Aorta (tissue), 5 donors: ENCODE measurements at regions of chr4 and their contacts with region 1.

Region 1: GRCh38 chr4:63869370-63869769 is 539.9 kb downstream of the TECRL start:
- DNase-seq: no peak
- ATAC-seq: no peak
- H3K4me3 ChIP-seq: no peak overlapping the region
- H3K27ac ChIP-seq: no peak overlapping the region
- H3K4me1 ChIP-seq: no peaks in the 10 kb centered on the region
- H3K27me3 ChIP-seq: no peaks in the 10 kb centered on the region

Region 2: DNA sequence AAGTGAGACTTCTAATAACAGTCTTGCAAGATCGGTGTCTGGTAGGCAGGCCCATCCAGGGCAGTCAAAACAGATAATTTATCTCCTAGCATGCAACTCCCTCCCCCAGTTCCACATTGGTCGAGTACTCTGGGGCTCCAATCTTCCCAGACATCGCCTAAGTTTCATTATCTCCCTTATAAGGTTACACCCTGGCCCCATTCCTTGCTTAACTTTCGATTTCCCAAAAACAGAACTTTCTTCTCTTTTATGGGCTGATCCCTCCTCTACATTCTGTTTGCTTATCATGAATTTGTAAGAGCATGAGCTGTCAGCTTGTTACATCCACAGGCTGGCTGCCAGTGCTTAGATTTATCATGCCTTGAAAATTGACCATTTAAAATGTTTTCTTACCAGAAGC is 68.6 kb after region 1 on chr4:
- intact Hi-C with region 1: loop called in 1 of 2 experiments (anchors 10 kb)
- DNase-seq: no peak
- ATAC-seq: peak; percentile 68
- H3K4me3 ChIP-seq: no peak overlapping the region
- H3K27ac ChIP-seq: no peak overlapping the region
- H3K4me1 ChIP-seq: no peaks in the 10 kb centered on the region
- H3K27me3 ChIP-seq: no peaks in the 10 kb centered on the region